PC-3 (cell line): ENCODE measurements at regions of chr3 and their contacts with region 1.

Region 1: DNA sequence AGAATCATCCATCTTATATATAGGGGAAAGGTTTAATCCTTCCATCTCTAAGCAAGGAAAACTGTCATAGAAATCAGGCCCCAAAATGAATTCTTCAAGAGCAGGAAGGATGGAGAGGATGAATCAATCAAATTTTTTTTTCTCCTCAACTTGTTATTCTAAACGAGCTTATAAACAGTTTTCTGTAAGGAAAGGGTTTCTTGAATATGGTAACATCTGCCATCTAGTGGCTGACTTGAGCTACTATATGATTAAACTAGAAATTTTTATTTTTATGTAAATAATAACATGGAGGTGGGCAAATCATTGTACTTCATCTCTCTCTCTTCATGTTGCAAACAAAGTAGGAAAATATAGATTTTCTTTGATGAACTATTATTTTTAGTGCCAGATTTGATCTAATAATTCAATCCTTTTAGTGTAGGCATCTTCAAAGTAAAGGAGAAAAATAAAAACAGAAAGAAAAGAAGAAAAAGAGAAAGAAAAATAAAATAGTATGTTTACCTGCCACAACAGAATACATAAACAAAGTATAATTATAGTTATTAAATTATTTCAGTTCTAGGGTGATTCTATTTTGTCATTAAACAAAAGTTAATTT is 146.6 kb downstream of the SERPINI1 start:
- DNase-seq: peak; percentile 73
- ATAC-seq: peak; percentile 45
- H3K4me3 ChIP-seq: no peak overlapping the region
- H3K27ac ChIP-seq: no peak overlapping the region
- H3K4me1 ChIP-seq: peaks cover 17% of the 10 kb centered on the region
- H3K27me3 ChIP-seq: peaks cover 8% of the 10 kb centered on the region; the same call in 1 of the 2 replicates
- CTCF ChIP-seq: peak; percentile 77

Region 2: DNA sequence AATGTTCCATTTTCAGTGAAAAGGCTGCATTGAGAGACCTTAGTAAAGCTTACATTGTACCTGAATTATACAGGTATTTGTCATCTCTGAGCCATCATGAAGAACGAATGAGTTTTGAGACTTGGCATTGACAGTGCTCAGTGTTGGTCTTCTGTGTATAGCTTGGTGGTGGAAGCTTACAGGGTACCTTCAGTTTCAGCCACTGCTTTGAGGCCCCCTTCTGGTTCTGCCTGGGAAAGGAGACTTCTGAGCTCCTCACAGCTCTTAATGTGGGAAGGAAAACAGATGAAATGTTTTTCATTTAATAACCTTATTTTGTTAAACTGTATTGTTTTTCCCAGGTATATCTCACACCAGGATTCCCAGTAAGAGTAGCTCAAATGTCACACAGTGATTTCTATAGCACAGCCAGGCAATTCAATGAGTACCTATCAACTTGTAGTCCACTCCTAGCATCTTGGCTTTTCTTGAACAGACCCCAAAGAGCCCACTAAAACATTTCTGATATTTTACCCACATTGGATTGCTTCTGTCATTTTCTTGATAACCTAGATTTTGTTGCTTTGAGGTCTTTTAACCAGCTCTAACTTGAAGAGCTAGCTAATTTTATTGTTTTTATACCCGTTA is 141.1 kb before region 1 on chr3:
- CTCF ChIA-PET with region 1: interaction called, 8 read pairs
- POLR2A ChIA-PET with region 1: no interaction called
- intact Hi-C with region 1: loop called (anchors 1 kb)
- DNase-seq: peak; percentile 59
- ATAC-seq: peak; percentile 96
- H3K4me3 ChIP-seq: no peak overlapping the region
- H3K27ac ChIP-seq: no peak overlapping the region
- H3K4me1 ChIP-seq: peaks cover 10% of the 10 kb centered on the region; the same call in 1 of the 2 replicates
- H3K27me3 ChIP-seq: no peaks in the 10 kb centered on the region
- CTCF ChIP-seq: peak; percentile 67

Region 3: GRCh38 chr3:167754049-167754448 is 128.1 kb before region 1 on chr3:
- CTCF ChIA-PET with region 1: no interaction called
- POLR2A ChIA-PET with region 1: no interaction called
- intact Hi-C with region 1: no loop called
- DNase-seq: no peak
- ATAC-seq: no peak
- H3K4me3 ChIP-seq: no peak overlapping the region
- H3K27ac ChIP-seq: no peak overlapping the region
- H3K4me1 ChIP-seq: no peaks in the 10 kb centered on the region
- H3K27me3 ChIP-seq: no peaks in the 10 kb centered on the region
- CTCF ChIP-seq: no peak

Region 4: DNA sequence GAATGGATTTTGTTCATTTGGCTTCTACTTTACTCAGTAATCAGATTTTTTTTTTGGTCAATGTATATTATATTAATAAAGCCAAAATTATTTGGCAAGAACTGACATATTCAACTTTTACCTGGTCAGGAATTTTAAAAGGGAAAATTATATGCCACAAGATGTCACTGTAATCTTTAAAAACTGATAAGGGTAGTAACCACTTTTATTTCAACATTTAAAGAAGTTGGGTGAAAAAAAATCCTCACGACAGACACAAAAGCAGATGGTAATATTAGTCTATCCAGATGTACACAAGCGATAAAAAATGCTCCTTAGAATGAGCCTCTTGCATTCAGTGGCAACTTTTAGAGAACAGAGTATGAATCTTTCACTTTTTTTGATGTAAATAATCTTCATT is 44.7 kb before region 1 on chr3:
- CTCF ChIA-PET with region 1: interaction called, 17 read pairs
- POLR2A ChIA-PET with region 1: interaction called, 5 read pairs
- intact Hi-C with region 1: loop called (anchors 1 kb)
- DNase-seq: peak; percentile 52
- ATAC-seq: peak; percentile 18
- H3K4me3 ChIP-seq: no peak overlapping the region
- H3K27ac ChIP-seq: no peak overlapping the region
- H3K4me1 ChIP-seq: no peaks in the 10 kb centered on the region
- H3K27me3 ChIP-seq: no peaks in the 10 kb centered on the region
- CTCF ChIP-seq: peak; percentile 67